ENCODE measurements at regions of chr11 and their contacts with region 1.

Region 1: DNA sequence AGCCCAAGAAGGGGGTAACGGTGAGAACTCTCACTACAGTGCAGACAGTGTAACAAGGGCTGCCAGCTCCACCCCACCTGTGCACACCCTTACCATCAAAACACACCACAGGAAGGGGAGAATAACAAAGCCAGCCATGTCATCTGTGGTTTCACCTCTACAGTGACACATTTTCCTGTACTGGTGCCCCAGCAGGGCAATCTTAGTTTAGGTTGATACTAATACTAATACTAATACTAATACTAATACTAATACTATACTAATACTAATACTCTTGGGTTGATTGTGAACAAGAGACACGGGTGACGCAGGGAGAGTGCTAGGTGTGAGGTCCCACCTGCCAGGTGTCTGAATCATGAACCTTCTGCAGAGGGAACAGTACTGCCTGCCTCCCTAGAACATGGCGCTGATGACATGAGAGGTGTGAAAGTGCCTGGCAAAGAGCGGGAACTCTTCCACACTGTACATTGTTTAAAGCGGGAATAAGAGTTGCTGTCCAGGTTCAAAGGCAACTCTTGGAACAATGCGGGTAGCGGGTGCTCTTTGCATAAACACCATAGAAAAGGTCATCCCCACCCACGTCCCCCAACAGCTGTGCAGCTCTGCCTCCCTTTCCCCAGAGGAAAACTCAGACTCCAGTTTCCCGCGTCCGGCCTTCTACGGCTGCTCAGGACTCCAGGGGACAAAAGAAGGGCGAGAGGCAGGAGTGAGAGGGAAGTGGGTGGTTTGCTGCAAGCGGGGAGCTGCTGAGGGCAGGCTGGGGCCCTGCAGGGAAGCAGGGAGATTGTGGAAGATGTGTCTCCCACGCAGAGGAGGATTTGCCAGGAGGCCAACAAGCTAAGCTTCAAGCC is 25.0 kb upstream of the TMPRSS4 start:
- DNase-seq: no peak
- H3K4me3 ChIP-seq: no peak overlapping the region
- H3K27ac ChIP-seq: no peak overlapping the region
- H3K4me1 ChIP-seq: no peaks in the 10 kb centered on the region
- H3K27me3 ChIP-seq: no peaks in the 10 kb centered on the region
- CTCF ChIP-seq: no peak
- EP300 ChIP-seq: no peak
- POLR2A ChIP-seq: no peak

Region 2: GRCh38 chr11:117426269-117426685 is 625.6 kb before region 1 on chr11:
- intact Hi-C with region 1: loop called (anchors 5 kb)
- DNase-seq: peak; percentile 82
- H3K4me3 ChIP-seq: no peak overlapping the region
- H3K27ac ChIP-seq: no peak overlapping the region
- H3K4me1 ChIP-seq: peaks cover 0 to 7% (median 5%) of the 10 kb centered on the region in 4 donors
- H3K27me3 ChIP-seq: no peaks in the 10 kb centered on the region
- CTCF ChIP-seq: peak; percentile 84 to 98 (median 94)
- EP300 ChIP-seq: no peak
- POLR2A ChIP-seq: no peak

Region 3: DNA sequence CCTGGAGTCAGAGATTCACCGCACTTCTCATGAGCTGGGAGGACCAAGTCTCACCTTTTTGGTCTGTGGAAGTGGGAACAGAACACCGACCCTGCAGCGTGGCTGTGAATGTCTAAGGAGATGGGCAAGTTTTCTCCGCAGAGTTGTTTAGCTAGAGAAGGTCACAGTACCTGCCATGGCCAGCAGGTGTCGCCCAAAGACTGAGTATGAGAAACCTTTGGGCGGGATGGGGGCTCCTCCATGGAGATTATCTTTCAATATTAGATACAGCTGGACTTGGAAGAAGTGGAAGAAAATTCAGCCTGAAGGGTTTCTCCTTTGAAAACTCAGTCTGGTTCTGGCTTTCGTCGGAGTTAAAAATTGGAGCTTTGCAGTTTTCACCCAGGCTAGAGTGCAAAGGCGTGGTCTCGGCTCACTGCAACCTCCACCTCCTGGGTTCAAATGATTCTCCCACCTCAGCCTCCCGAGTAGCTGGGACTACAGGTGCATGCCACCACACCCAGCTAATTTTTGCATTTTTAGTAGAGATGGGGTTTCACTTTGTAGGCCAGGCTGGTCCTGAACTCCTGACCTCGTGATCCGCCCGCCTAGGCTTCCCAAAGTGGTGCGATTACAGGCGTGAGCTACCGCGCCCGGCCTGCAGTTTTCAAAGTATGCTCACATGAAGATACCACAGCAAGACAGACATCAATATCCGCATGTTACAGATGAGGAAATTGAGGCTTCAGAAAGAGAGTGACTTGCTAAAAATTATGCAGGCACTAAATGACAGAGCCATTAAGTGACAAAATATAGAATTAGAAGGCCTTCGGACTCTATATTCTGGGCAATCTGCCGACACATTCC is 244.1 kb before region 1 on chr11:
- intact Hi-C with region 1: loop called (anchors 2 kb)
- DNase-seq: peak; percentile 88
- H3K4me3 ChIP-seq: no peak overlapping the region
- H3K27ac ChIP-seq: no peak overlapping the region
- H3K4me1 ChIP-seq: no peaks in the 10 kb centered on the region
- H3K27me3 ChIP-seq: no peaks in the 10 kb centered on the region
- CTCF ChIP-seq: peak; percentile 72 to 92 (median 88)
- EP300 ChIP-seq: no peak
- POLR2A ChIP-seq: no peak

Region 4: GRCh38 chr11:118015385-118015841 is 36.4 kb before region 1 on chr11:
- intact Hi-C with region 1: no loop called
- DNase-seq: no peak
- H3K4me3 ChIP-seq: no peak overlapping the region
- H3K27ac ChIP-seq: no peak overlapping the region
- H3K4me1 ChIP-seq: no peaks in the 10 kb centered on the region
- H3K27me3 ChIP-seq: peaks cover 0 to 5% (median 3%) of the 10 kb centered on the region in 3 donors
- CTCF ChIP-seq: no peak
- EP300 ChIP-seq: no peak
- POLR2A ChIP-seq: no peak